Sciatic nerve (tissue), 2 donors: ENCODE measurements at regions of chr14 and their contacts with region 1.

Region 1: GRCh38 chr14:23379366-23380196 is 2.7 kb downstream of the CMTM5 start:
- DNase-seq: peak; percentile 79
- ATAC-seq: no peak

Region 2: DNA sequence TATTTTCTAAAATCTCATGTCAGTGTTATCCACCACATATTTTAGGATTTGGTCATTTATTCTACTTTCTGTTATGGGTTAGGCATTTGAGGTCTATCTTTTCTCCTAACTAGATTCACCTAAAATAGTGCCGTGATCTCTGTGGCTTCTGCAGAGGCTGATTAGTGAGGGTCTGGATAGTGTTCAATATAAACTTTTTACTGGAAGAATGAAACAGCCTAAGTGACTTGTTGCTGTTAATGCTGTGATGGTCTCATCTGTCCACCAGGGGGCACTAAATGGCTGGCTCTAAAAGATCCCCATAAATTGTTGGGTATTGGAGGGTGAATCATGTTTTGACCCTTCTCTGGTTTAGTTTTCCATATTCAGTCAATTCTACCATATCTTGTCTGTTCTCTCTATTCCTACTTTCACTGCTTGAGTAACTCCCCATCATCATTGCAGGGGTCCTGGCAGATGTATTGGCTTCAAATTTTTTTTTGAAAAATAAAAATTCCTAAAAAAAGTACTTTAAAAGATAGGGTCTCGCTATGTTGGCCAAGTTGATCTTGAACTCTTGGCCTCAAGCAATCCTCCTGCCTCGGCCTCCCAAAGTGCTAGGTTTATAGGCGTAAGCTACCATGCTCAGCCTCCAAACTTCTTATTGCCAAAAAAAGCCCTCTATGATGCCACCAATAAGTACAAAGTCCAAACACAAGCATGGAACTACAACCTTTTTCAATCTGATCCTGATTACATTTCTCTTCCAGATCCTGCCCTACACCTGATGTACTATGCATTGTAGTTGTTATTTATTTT is 51.4 kb before region 1 on chr14:
- intact Hi-C with region 1: loop called (anchors 2 kb)
- DNase-seq: peak; percentile 84
- ATAC-seq: peak; percentile 83